ENCODE measurements at regions of chr22 and their contacts with region 1.

Region 1: DNA sequence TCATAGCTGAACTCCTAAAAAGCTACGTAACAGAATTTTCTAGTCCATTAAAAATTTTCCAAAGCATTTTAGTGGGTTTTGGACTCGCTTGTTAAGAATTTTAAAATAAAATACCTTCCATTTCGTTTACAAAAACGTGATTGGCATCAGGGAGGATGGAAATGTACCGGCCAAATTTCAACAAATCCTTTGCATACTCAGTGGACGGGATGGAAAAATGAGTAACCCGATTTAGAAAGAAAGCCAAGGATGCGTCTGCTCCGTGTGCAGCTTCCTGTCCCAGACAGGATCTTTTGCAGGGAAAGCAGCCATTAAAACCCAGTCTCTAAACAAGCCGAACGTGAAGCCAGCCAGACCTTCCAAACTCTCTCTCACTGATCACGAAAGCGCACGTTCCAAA is 15.6 kb downstream of the TMEM184B start:
- DNase-seq: no peak
- H3K4me3 ChIP-seq: peak overlapping the region; percentile 17 to 26
- H3K27ac ChIP-seq: peak overlapping the region; percentile 89
- H3K4me1 ChIP-seq: peaks cover 42% of the 10 kb centered on the region
- H3K27me3 ChIP-seq: no peaks in the 10 kb centered on the region
- CTCF ChIP-seq: no peak
- POLR2A ChIP-seq: peak in 1 of 2 donors; percentile 3

Region 2: DNA sequence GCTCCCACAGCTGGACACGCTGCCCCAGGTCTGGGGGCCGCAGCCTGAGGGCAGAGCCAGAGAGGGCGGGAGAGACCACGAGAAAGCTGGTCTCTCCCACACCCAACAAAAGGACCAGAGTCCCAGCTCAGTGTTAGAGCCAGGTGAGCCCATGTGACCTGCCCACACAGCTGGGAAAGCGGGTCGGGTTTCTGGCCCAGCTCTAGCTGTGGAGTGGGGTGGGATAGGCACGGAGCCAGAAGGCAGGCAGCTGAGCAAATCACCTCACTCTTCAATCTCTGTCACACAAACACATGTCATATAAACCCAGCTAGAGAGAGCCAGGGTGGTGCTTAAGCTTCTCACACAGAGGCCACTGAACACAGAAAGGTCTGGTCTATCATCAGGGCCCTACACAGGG is 1720.5 kb before region 1 on chr22:
- intact Hi-C with region 1: no loop called
- DNase-seq: no peak
- H3K4me3 ChIP-seq: no peak overlapping the region
- H3K27ac ChIP-seq: no peak overlapping the region
- H3K4me1 ChIP-seq: no peaks in the 10 kb centered on the region
- H3K27me3 ChIP-seq: no peaks in the 10 kb centered on the region
- CTCF ChIP-seq: no peak
- POLR2A ChIP-seq: no peak

Region 3: GRCh38 chr22:38201710-38202436 is 55.3 kb before region 1 on chr22 and contains the start of gene MAFF:
- intact Hi-C with region 1: loop called (anchors 2 kb)
- DNase-seq: peak in 1 of 2 donors; percentile 98
- H3K4me3 ChIP-seq: peak within 1 kb of the TSS; percentile 85 to 90
- H3K27ac ChIP-seq: peak within 1 kb of the TSS; percentile 100
- H3K4me1 ChIP-seq: peaks cover 40% of the 10 kb centered on the region
- H3K27me3 ChIP-seq: no peaks in the 10 kb centered on the region
- CTCF ChIP-seq: no peak
- POLR2A ChIP-seq: peak in 1 of 2 donors; percentile 96
- total RNA-seq, gene MAFF: 90.6 TPM

Region 4: DNA sequence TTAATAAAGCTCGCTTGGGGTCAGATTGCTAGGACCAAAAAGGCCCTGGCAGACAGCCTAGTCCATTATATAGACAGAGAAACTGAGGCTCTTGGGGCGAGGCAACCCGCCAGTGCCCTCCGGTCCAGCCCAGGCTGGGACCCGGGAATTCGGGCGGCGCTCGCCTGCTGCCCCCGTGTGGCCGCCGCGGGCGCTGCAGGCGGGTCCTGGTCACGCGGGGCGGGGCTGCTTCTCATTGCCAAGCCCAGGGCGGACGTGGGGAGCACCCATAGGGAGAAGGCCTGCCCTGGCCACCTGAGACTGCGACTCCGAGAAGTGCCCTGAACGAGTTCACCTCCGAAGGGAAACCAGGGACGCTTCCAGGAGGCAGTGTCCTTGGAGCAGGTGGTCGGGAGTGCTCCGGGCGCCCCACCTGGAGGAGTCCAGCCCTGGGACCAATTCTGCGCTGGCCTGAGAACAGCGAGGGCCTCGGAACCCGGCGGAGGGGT is 96.0 kb after region 1 on chr22:
- intact Hi-C with region 1: no loop called
- DNase-seq: no peak
- H3K4me3 ChIP-seq: no peak overlapping the region
- H3K27ac ChIP-seq: peak overlapping the region; percentile 7
- H3K4me1 ChIP-seq: no peaks in the 10 kb centered on the region
- H3K27me3 ChIP-seq: no peaks in the 10 kb centered on the region
- CTCF ChIP-seq: peak; percentile 91 to 98 (median 95)
- POLR2A ChIP-seq: no peak